CD4-positive, alpha-beta memory T cell (primary cell): ENCODE measurements at regions of chr10 and their contacts with region 1.

Region 1: DNA sequence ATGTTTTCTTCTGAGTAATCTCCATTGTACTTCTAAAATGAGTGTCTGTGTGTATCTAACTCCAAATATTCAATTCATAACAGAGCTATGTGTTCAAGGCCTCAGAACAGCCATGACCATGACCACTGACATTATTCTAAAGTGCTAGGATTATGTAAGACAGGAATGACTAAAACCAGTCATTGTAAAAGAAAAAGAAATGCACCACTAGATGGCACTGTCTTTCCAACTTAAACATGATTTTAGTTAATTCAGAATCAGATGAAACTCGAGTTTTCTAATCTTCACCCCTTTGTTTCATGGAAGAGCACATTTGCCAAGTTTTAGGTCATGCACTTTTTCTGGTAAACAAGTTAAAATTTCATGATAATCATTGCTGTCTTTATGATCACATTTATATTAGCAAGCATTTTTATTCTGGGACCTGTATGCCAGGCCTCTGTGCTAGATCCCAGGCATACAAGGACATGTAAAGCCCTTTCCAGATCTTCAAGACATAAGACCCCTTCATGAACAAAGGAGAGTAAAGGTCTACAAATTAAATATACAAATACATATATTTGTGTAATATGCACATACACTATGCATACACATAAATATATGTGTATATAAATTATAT is 26.1 kb upstream of the RSU1 start:
- DNase-seq: peak in 4 of 5 donors; percentile 63 to 69 (median 67)
- H3K4me3 ChIP-seq: no peak overlapping the region
- H3K4me3 Mint-ChIP-seq: no peak overlapping the region
- H3K27ac ChIP-seq: no peak overlapping the region
- H3K27ac Mint-ChIP-seq: peak overlapping the region in 1 of 7 donors; percentile 31
- H3K4me1 ChIP-seq: no peaks in the 10 kb centered on the region
- H3K4me1 Mint-ChIP-seq: peaks cover 0 to 3% (median 0%) of the 10 kb centered on the region in 4 donors
- H3K27me3 ChIP-seq: no peaks in the 10 kb centered on the region
- H3K27me3 Mint-ChIP-seq: no peaks in the 10 kb centered on the region

Region 2: GRCh38 chr10:16822726-16823360 is 20.5 kb before region 1 on chr10:
- CTCF ChIA-PET with region 1: interaction called, 11 read pairs
- POLR2A ChIA-PET with region 1: interaction called, 4 read pairs
- intact Hi-C with region 1: loop called (anchors 1 kb)
- DNase-seq: no peak
- H3K4me3 ChIP-seq: no peak overlapping the region
- H3K4me3 Mint-ChIP-seq: no peak overlapping the region
- H3K27ac ChIP-seq: no peak overlapping the region
- H3K27ac Mint-ChIP-seq: no peak overlapping the region
- H3K4me1 ChIP-seq: peaks cover 5% of the 10 kb centered on the region
- H3K4me1 Mint-ChIP-seq: peaks cover 2 to 14% (median 6%) of the 10 kb centered on the region in 4 donors
- H3K27me3 ChIP-seq: no peaks in the 10 kb centered on the region
- H3K27me3 Mint-ChIP-seq: no peaks in the 10 kb centered on the region

Region 3: GRCh38 chr10:16933783-16934182 is 90.4 kb after region 1 on chr10:
- CTCF ChIA-PET with region 1: no interaction called
- POLR2A ChIA-PET with region 1: no interaction called
- intact Hi-C with region 1: no loop called
- DNase-seq: no peak
- H3K4me3 ChIP-seq: no peak overlapping the region
- H3K4me3 Mint-ChIP-seq: no peak overlapping the region
- H3K27ac ChIP-seq: no peak overlapping the region
- H3K27ac Mint-ChIP-seq: no peak overlapping the region
- H3K4me1 ChIP-seq: no peaks in the 10 kb centered on the region
- H3K4me1 Mint-ChIP-seq: no peaks in the 10 kb centered on the region
- H3K27me3 ChIP-seq: no peaks in the 10 kb centered on the region
- H3K27me3 Mint-ChIP-seq: no peaks in the 10 kb centered on the region

Region 4: GRCh38 chr10:17249820-17250219 is 406.5 kb after region 1 on chr10:
- CTCF ChIA-PET with region 1: interaction called, 43 read pairs
- POLR2A ChIA-PET with region 1: no interaction called
- intact Hi-C with region 1: loop called (anchors 1 kb)
- DNase-seq: peak in 1 of 5 donors; percentile 22
- H3K4me3 ChIP-seq: no peak overlapping the region
- H3K4me3 Mint-ChIP-seq: no peak overlapping the region
- H3K27ac ChIP-seq: no peak overlapping the region
- H3K27ac Mint-ChIP-seq: no peak overlapping the region
- H3K4me1 ChIP-seq: no peaks in the 10 kb centered on the region
- H3K4me1 Mint-ChIP-seq: no peaks in the 10 kb centered on the region
- H3K27me3 ChIP-seq: no peaks in the 10 kb centered on the region
- H3K27me3 Mint-ChIP-seq: no peaks in the 10 kb centered on the region

Region 5: DNA sequence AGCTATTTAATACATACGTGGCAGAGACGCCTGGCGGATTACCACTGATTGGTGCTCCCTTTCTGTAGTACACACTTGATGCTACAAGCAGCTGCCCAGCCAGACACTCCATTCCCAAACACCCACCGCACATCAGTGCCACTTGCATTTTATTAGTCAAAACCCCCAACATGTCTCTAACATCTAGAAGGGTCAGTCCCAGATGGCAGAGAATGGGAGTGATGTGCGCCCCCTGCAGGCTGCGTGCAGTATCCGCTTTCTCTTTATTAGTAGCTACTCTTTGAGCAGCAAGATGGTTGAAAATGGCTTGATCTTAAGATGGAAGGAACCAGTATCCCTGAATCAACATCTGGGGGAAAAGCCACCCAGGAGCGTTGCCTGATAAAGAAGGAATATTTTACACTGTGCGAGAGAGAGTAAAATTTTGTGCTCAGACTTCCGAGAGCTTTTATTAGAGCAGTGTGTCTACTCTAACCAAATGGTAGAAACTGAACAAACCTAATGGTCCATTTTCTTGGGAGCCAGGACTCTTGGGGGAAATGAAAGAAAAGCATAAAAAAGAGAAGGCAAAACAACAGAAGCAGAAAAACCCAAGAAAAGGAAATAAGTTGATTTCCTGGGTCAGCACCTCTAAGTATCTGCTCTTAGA is 532.7 kb after region 1 on chr10:
- CTCF ChIA-PET with region 1: interaction called, 4 read pairs
- POLR2A ChIA-PET with region 1: no interaction called
- intact Hi-C with region 1: loop called (anchors 5 kb)
- DNase-seq: no peak
- H3K4me3 ChIP-seq: no peak overlapping the region
- H3K4me3 Mint-ChIP-seq: no peak overlapping the region
- H3K27ac ChIP-seq: no peak overlapping the region
- H3K27ac Mint-ChIP-seq: no peak overlapping the region
- H3K4me1 ChIP-seq: no peaks in the 10 kb centered on the region
- H3K4me1 Mint-ChIP-seq: no peaks in the 10 kb centered on the region
- H3K27me3 ChIP-seq: no peaks in the 10 kb centered on the region
- H3K27me3 Mint-ChIP-seq: peaks cover 2 to 12% of the 10 kb centered on the region in 2 donors